ENCODE measurements at regions of chr19 and their contacts with region 1.

Region 1: DNA sequence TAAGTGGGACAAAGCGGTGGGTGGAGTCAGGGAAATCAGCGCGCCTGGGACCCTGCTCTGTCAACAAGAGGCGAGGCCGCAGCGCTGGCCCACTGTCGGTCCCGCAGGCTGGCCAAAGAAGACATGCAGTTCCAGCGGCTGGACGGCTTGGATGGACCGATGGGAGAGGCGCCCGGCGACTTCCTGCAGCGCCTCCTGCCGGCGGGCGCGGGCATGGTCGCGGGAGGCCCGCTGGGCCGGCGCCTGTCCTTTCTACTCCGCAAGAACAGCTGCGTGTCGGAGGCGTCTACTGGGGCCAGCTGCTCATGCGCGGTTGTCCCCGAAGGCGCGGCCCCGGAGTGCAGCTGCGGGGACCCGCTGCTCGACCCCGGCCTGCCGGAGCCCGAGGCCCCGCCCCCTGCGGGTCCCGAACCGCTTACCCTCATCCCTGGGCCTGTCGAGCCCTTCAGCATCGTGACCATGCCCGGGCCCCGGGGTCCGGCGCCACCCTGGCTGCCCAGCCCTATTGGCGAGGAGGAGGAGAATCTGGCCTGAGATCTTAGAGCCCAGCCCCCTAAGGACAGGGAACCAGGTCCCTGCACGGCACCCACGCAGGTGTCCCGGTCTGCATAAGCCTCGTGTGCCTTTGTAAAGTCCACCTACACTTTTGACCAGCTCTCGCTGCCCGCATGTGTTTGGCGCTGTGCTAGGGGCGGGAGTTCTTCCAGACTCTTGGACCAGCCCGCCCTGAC is 6.1 kb downstream of the BEST2 start:
- DNase-seq: peak; percentile 71
- H3K4me3 Mint-ChIP-seq: peak overlapping the region; percentile 49
- H3K27ac Mint-ChIP-seq: no peak overlapping the region
- H3K4me1 Mint-ChIP-seq: peaks cover 11% of the 10 kb centered on the region
- H3K27me3 Mint-ChIP-seq: peaks cover 4% of the 10 kb centered on the region

Region 2: DNA sequence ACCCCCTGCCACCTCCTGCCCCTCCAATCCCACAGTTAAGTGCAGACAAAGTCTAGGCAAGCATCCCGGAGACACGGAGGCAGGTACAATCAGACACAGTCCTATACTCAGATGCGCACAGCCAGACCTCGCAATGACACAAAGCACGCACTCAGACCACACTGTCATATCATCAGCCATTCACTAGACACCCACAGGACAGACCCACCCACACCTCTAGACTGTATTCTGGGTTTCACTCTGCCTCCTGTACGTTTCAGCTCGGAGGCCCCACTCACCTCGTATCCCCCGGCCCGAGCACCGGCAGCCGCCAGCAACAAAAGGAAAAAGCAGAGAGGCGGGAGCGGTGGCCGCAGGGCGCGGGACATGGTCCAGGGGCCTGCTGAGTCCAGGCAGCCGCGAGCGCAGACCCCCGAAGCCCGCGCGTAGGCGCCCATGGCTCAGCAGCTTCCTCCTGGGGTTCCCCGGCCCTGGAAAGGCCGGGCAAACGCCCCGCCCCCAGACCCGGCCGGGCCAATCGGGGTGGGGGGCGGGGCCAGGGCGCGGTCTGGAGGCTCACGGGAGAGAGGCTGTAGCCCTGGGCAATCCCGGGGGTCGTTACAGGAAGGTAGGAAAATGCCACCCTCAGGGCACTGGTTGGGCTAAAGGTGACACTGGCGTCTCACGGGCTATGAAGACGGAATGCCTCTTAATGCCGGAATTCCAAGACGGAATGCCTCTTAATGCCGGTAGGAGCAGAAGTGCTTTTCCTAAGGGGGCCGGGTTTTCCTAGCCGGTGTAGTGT is 91.3 kb before region 1 on chr19 and contains the starts of genes MAN2B1 and WDR83:
- CTCF ChIA-PET with region 1: no interaction called
- POLR2A ChIA-PET with region 1: no interaction called
- DNase-seq: peak; percentile 80
- H3K4me3 Mint-ChIP-seq: peak within 1 kb of the TSS; percentile 92
- H3K27ac Mint-ChIP-seq: peak within 1 kb of the TSS; percentile 97
- H3K4me1 Mint-ChIP-seq: peaks cover 64% of the 10 kb centered on the region
- H3K27me3 Mint-ChIP-seq: no peaks in the 10 kb centered on the region
- total RNA-seq, gene MAN2B1: 146 to 150 TPM
- total RNA-seq, gene WDR83: 16.9 to 21.3 TPM

Region 3: DNA sequence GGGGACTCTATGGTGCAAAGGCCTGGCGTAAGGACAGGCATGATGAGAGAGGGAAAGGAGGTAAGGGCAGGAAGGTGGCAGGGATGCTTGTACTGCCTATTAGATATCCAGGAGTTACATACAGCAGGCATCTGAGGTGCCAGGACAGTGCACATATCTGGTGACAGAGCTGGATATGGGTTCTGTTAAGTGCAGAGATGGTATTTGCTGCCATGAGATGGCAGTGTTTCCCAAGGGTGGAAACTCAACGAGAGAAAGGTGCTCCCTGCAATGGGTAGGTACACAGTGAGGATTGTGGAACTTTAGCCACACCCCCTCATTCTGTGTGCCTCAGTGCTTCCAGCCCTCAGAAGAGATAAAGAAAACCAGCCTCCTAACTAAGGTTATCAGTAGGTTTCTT is 40.8 kb before region 1 on chr19:
- CTCF ChIA-PET with region 1: interaction called, 24 read pairs
- POLR2A ChIA-PET with region 1: interaction called, 3 read pairs
- DNase-seq: peak; percentile 57
- H3K4me3 Mint-ChIP-seq: no peak overlapping the region
- H3K27ac Mint-ChIP-seq: no peak overlapping the region
- H3K4me1 Mint-ChIP-seq: peaks cover 31% of the 10 kb centered on the region
- H3K27me3 Mint-ChIP-seq: no peaks in the 10 kb centered on the region

Region 4: DNA sequence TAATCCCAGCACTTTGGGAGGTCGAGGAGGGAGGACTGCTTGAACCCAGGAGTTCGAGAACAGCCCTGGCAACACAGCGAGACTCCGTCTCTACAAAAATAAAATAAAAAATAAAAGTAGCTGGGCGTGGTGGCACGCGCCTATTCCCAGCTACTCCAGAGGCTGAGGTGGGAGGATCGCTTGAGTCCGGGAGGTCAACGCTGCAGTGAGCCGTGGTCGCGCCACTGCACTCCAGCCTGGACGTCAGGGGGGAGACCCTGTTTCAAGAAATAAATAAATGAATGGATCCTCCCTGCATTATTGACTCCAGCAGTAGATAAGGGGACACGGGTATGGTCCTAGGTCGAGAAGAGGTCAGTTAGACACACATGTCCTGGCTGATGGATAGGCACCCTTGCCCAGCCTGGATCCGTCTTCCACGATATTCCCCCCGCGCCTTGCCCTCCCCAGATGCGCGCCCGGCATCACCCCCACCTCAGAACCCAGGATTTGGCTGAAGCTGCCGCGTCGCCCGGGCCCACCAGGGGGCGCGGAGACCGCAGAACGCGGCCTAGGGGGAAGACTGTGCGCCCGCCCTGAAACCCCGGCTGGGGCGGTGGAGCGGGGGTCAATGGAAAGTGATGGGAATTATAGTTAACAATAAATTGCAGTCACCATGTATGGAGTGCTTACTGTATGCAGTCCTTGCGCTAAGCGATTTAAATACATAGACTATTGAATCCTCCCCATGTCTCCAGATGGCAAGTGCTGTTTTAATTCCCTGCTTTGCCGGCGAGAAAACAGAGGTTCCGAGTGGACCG is 19.7 kb after region 1 on chr19:
- CTCF ChIA-PET with region 1: interaction called, 11 read pairs
- POLR2A ChIA-PET with region 1: interaction called, 6 read pairs
- DNase-seq: peak; percentile 85
- H3K4me3 Mint-ChIP-seq: peak overlapping the region; percentile 83
- H3K27ac Mint-ChIP-seq: peak overlapping the region; percentile 92
- H3K4me1 Mint-ChIP-seq: peaks cover 44% of the 10 kb centered on the region
- H3K27me3 Mint-ChIP-seq: no peaks in the 10 kb centered on the region